IMR-90 (cell line): ENCODE measurements at regions of chr12 and their contacts with region 1.

Region 1: GRCh38 chr12:57213058-57213715 is 3.4 kb upstream of the NXPH4 start:
- DNase-seq: peak; percentile 81
- ATAC-seq: peak; percentile 72
- H3K4me3 ChIP-seq: no peak overlapping the region
- H3K27ac ChIP-seq: no peak overlapping the region
- H3K4me1 ChIP-seq: peaks cover 7% of the 10 kb centered on the region
- H3K27me3 ChIP-seq: peaks cover 33% of the 10 kb centered on the region
- CTCF ChIP-seq: peak; percentile 96
- POLR2A ChIP-seq: peak; percentile 30; the same call in 1 of the 2 replicates
- RAD21 ChIP-seq: peak; percentile 89

Region 2: GRCh38 chr12:56998981-56999380 is 214.2 kb before region 1 on chr12:
- CTCF ChIA-PET with region 1: no interaction called
- POLR2A ChIA-PET with region 1: no interaction called
- dilution Hi-C with region 1: no loop called
- in situ Hi-C with region 1: no loop called
- intact Hi-C with region 1: no loop called
- DNase-seq: no peak
- ATAC-seq: no peak
- H3K4me3 ChIP-seq: no peak overlapping the region
- H3K27ac ChIP-seq: no peak overlapping the region
- H3K4me1 ChIP-seq: peaks cover 6% of the 10 kb centered on the region
- H3K27me3 ChIP-seq: no peaks in the 10 kb centered on the region
- CTCF ChIP-seq: no peak
- POLR2A ChIP-seq: no peak
- RAD21 ChIP-seq: no peak

Region 3: GRCh38 chr12:57127710-57128533 is 85.3 kb before region 1 on chr12 and contains the start of gene LRP1:
- CTCF ChIA-PET with region 1: no interaction called
- POLR2A ChIA-PET with region 1: no interaction called
- dilution Hi-C with region 1: no loop called
- in situ Hi-C with region 1: no loop called
- intact Hi-C with region 1: no loop called
- DNase-seq: peak; percentile 82
- ATAC-seq: peak; percentile 69
- H3K4me3 ChIP-seq: peak within 1 kb of the TSS; percentile 90
- H3K27ac ChIP-seq: peak within 1 kb of the TSS; percentile 100
- H3K4me1 ChIP-seq: peaks cover 18% of the 10 kb centered on the region
- H3K27me3 ChIP-seq: no peaks in the 10 kb centered on the region
- CTCF ChIP-seq: no peak
- POLR2A ChIP-seq: no peak
- RAD21 ChIP-seq: no peak
- total RNA-seq, gene LRP1: 73.1 and 75.5 TPM in 2 replicates

Region 4: DNA sequence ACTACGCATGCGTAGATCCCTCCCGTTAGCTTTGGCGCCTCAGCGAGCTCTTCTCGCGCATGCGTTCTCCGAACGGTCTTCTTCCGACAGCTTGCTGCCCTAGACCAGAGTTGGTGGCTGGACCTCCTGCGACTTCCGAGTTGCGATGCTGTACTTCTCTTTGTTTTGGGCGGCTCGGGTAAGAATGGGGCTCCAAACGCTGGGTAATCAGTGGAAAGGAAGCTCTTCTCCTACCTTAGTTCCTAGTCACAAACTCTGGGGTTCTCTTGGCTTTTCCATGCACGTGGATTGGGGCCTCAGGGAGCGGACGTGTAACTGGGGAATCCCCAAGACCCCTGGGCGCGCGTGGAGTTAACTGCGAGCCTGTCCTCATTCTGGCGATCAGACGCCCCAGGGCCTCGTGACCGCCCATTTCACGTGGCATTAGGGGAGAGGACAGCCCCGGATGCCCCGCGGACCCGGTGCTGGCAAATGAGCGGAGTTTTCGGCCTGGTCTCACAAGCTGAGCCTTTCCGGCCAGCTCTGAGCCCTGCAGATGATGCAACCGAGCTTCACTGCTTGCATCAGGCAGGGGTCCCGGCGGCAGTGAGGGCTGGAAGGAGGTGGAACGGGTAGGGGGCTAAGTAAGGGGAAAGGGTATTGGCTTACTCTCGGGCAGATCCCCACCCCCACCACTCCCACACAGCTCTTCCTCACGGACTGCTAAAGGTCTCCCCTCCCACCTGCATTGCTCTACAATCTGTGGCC is 16.6 kb after region 1 on chr12 and contains the start of gene SHMT2:
- CTCF ChIA-PET with region 1: interaction called, 14 read pairs
- POLR2A ChIA-PET with region 1: interaction called, 5 read pairs
- dilution Hi-C with region 1: no loop called
- in situ Hi-C with region 1: no loop called
- intact Hi-C with region 1: no loop called
- DNase-seq: peak; percentile 95
- ATAC-seq: peak; percentile 71
- H3K4me3 ChIP-seq: peak within 1 kb of the TSS; percentile 59
- H3K27ac ChIP-seq: peak within 1 kb of the TSS; percentile 94
- H3K4me1 ChIP-seq: peaks cover 16% of the 10 kb centered on the region
- H3K27me3 ChIP-seq: peaks cover 3% of the 10 kb centered on the region; the same call in 1 of the 2 replicates
- CTCF ChIP-seq: no peak; the same call in 1 of the 2 replicates
- POLR2A ChIP-seq: peak; percentile 94
- RAD21 ChIP-seq: no peak
- total RNA-seq, gene SHMT2: 225 and 266 TPM in 2 replicates

Region 5: DNA sequence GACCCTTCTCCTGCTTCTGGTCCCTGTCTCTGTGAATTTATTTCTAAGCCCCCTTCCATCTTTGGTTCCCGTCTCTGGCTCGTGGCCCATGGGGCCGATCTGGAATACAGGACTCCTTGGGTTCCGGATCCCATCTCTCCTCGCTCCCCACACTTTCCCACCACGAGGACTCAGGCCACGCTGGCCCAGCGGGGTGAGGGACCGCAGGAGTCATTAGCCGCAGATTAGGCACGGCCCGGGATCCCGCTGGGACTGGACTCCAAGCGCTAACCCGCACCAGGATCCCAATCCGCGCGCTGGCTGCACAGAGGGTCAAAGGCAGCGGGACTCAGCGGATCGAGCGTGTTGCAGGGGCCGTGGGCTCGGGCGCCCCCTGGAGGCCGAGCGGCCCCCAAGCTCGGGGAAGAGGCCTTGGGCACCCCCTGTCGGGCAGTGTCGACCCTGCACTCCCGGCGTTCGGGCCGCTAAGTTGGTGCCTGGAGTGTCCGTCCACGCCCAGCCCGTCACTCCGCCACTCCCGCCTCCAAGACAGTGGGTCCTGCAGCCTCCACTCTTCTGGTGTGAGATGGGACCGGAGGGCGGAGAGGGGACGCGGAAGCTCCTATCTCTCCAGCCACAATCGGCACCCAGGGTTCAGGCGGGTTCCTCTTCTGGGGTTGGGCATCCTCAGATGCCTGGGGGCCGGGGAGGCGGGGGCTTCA is 25.8 kb after region 1 on chr12:
- CTCF ChIA-PET with region 1: interaction called, 25 read pairs
- POLR2A ChIA-PET with region 1: interaction called, 12 read pairs
- dilution Hi-C with region 1: no loop called
- in situ Hi-C with region 1: no loop called
- intact Hi-C with region 1: loop called (anchors 1 kb)
- DNase-seq: peak; percentile 82
- ATAC-seq: peak; percentile 82
- H3K4me3 ChIP-seq: peak overlapping the region; percentile 55
- H3K27ac ChIP-seq: peak overlapping the region; percentile 73
- H3K4me1 ChIP-seq: peaks cover 17% of the 10 kb centered on the region
- H3K27me3 ChIP-seq: peaks cover 6% of the 10 kb centered on the region; the same call in 1 of the 2 replicates
- CTCF ChIP-seq: peak; percentile 100
- POLR2A ChIP-seq: no peak
- RAD21 ChIP-seq: peak; percentile 91

Region 6: DNA sequence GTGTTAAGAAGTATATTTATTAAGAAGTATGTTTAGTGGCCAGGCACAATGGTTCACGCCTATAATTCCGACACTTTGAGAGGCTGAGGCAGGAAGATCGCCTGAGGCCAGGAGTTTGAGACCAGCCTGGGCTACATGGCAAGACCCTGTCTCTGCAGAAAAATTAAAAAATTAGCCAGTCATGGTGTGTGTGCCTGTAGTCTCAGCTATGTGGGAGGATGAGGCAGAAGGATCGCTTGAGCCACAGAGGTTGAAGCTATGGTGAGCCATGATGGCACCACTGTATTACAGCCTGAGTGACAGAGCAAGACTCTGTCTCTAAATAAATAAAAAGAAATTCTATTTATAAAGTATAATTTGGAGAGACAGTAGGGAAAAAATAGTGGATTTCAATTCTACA is 197.3 kb after region 1 on chr12:
- CTCF ChIA-PET with region 1: no interaction called
- POLR2A ChIA-PET with region 1: no interaction called
- dilution Hi-C with region 1: no loop called
- in situ Hi-C with region 1: no loop called
- intact Hi-C with region 1: no loop called
- DNase-seq: no peak
- ATAC-seq: no peak
- H3K4me3 ChIP-seq: no peak overlapping the region
- H3K27ac ChIP-seq: no peak overlapping the region
- H3K4me1 ChIP-seq: 0 out of 2 replicates have a peak, but pooled peaks cover 2% of the 10 kb centered on the region
- H3K27me3 ChIP-seq: no peaks in the 10 kb centered on the region
- CTCF ChIP-seq: no peak
- POLR2A ChIP-seq: no peak
- RAD21 ChIP-seq: no peak